Heart left ventricle (tissue), 16 donors: ENCODE measurements at regions of chr4 and their contacts with region 1.

Region 1: DNA sequence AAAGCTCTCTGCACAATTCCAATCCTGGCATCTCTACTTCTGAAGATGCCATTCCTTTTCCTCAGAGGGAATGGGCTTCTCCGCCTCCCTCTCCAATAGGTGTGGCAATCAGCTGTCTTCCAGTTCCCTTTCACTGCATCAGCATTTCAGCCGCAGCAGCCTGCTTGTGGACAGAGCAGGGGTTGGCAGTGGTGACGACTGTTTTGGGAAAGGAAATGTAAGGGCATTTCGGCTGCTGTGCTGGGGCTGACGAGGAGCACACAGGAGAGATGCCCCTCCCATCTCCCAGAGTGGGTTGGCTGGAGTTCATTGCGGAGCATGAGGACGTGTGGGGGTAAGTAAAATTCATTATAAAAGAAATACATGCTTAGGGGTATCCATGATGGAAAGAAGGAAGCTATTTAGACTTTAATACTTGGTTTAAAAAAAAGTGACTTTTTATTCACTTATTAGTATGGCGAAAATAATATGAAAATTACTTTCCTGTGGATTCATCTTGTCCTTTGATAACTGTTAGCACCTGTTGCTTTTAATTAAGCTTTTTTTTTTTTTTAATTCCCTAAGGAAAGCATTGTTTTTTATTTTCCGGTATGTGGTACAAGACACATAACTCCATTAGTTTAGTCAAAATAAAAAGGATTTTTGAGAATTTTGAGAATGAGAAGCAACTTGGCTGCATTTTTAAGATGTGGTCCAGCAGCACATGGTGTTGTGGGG is at the start of gene LIMCH1:
- DNase-seq: peak; percentile 79 to 90 (median 81)
- ATAC-seq: peak; percentile 82 to 92 (median 86)
- H3K4me3 ChIP-seq: peak within 1 kb of the TSS; percentile 7 to 51 (median 33)
- H3K27ac ChIP-seq: peak within 1 kb of the TSS; percentile 75 to 95 (median 88)
- H3K4me1 ChIP-seq: peaks cover 0 to 99% (median 79%) of the 10 kb centered on the region in 12 donors
- H3K27me3 ChIP-seq: no peaks in the 10 kb centered on the region
- CTCF ChIP-seq: no peak
- POLR2A ChIP-seq: no peak
- total RNA-seq, gene LIMCH1: 169 to 345 (median 247) TPM

Region 2: DNA sequence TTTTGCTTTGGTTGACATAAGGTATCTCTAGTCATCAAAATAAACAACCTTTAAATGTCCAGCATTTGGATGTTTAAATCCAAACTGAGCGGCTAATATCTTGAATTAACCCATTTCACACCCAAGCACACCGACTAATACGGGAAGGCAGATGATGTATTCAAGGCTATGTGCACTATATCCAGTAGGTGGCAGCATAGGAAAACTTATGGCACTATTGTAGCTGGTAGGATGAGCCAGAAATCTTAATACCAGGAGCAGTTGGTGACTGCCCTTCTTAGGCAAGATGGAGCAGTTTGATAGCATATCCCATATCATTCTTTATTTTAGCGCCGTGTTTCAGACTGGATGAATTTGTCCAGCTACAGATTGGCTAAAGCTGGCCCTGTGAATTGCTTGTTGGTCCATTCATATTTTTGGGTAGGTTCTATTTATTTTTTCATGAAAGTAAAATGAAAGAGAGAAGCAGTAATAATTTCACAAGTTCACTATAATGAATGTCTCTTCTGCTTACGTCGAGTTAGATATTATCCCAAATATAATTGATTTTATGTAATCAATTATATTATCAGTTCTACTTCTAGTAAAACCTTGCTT is 257.0 kb before region 1 on chr4:
- intact Hi-C with region 1: loop called in 1 of 10 experiments (anchors 10 kb)
- DNase-seq: peak in 2 of 5 donors; percentile 35 to 50
- ATAC-seq: peak; percentile 94 to 96 (median 95)
- H3K4me3 ChIP-seq: no peak overlapping the region
- H3K27ac ChIP-seq: no peak overlapping the region
- H3K4me1 ChIP-seq: peaks cover 0 to 7% (median 0%) of the 10 kb centered on the region in 12 donors
- H3K27me3 ChIP-seq: peaks cover 0 to 4% (median 0%) of the 10 kb centered on the region in 9 donors
- CTCF ChIP-seq: peak; percentile 78 to 94 (median 87)
- POLR2A ChIP-seq: no peak

Region 3: GRCh38 chr4:41369697-41370096 is 168.5 kb before region 1 on chr4:
- intact Hi-C with region 1: loop called in 8 of 10 experiments (anchors 5 to 10 kb)
- DNase-seq: peak in 4 of 5 donors; percentile 65 to 83 (median 71)
- ATAC-seq: peak; percentile 84 to 94 (median 92)
- H3K4me3 ChIP-seq: peak overlapping the region in 1 of 12 donors; percentile 24
- H3K27ac ChIP-seq: peak overlapping the region in 9 of 12 donors; percentile 38 to 85 (median 65)
- H3K4me1 ChIP-seq: peaks cover 0 to 95% (median 54%) of the 10 kb centered on the region in 12 donors
- H3K27me3 ChIP-seq: no peaks in the 10 kb centered on the region
- CTCF ChIP-seq: no peak
- POLR2A ChIP-seq: no peak

Region 4: DNA sequence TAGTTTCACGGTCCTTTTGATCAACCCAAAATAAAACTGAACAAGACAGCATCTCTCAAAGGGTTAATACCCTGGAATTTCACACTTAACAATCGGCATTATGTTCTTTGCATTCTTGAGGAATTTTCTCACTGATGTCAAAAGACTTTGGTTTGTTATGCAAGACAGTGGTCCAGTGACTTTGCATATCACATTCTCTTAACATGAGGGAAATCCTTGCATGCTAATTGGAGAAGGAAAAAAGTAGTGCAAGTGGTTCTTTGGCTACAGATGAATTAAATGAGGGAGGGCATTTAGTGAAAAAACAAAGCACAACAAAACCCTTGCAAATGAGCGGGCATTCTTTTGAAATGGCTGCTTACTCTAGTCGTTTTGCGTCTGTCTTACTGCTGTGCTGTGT is 105.3 kb before region 1 on chr4:
- intact Hi-C with region 1: loop called in 3 of 10 experiments (anchors 5 to 10 kb)
- DNase-seq: no peak
- ATAC-seq: no peak
- H3K4me3 ChIP-seq: no peak overlapping the region
- H3K27ac ChIP-seq: peak overlapping the region in 8 of 12 donors; percentile 2 to 93 (median 68)
- H3K4me1 ChIP-seq: peaks cover 3 to 88% (median 61%) of the 10 kb centered on the region in 12 donors
- H3K27me3 ChIP-seq: no peaks in the 10 kb centered on the region
- CTCF ChIP-seq: no peak
- POLR2A ChIP-seq: no peak

Region 5: DNA sequence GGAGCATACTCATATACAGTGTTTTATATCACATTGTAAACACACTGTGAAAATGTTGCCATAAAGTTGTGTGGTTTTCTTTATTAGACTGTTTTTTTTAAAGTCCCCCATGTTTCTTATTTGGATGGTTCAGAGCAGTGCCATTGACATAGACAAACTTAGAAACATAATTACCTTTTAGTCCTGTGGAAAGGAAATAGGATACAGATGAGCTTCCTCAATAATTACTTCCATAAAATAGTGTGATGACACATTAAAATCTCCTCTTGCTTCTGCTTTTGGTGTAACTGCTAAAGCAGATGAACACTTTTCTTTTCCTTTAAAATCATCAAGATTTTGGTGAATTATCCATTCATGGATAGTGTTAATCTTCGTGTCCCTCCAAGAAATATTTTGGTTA is 53.1 kb before region 1 on chr4:
- intact Hi-C with region 1: no loop called
- DNase-seq: no peak
- ATAC-seq: no peak
- H3K4me3 ChIP-seq: no peak overlapping the region
- H3K27ac ChIP-seq: no peak overlapping the region
- H3K4me1 ChIP-seq: peaks cover 0 to 53% (median 17%) of the 10 kb centered on the region in 12 donors
- H3K27me3 ChIP-seq: no peaks in the 10 kb centered on the region
- CTCF ChIP-seq: no peak
- POLR2A ChIP-seq: no peak

Region 6: DNA sequence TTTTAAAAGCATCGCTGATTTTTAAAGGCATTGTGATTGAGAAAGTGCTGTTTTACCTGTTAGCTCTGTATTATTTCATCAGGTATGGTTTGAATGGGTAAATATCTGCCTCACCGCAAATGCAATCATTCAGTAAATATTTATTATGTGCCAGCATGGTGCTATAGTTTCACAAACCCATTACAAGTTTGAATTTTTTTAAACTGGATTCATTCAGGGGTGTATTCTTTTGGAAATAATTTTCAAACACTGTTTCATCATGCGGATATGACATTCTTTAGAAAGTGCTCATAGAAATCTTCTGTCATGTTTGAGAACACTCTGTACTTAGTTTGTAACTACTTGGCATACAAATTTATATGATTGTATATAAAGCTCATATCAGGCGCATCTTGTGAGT is 37.0 kb after region 1 on chr4:
- intact Hi-C with region 1: loop called in 1 of 10 experiments (anchors 5 kb)
- DNase-seq: no peak
- ATAC-seq: no peak
- H3K4me3 ChIP-seq: no peak overlapping the region
- H3K27ac ChIP-seq: peak overlapping the region in 5 of 12 donors; percentile 1 to 48 (median 24)
- H3K4me1 ChIP-seq: peaks cover 4 to 74% (median 33%) of the 10 kb centered on the region in 12 donors
- H3K27me3 ChIP-seq: no peaks in the 10 kb centered on the region
- CTCF ChIP-seq: no peak
- POLR2A ChIP-seq: no peak

Region 7: DNA sequence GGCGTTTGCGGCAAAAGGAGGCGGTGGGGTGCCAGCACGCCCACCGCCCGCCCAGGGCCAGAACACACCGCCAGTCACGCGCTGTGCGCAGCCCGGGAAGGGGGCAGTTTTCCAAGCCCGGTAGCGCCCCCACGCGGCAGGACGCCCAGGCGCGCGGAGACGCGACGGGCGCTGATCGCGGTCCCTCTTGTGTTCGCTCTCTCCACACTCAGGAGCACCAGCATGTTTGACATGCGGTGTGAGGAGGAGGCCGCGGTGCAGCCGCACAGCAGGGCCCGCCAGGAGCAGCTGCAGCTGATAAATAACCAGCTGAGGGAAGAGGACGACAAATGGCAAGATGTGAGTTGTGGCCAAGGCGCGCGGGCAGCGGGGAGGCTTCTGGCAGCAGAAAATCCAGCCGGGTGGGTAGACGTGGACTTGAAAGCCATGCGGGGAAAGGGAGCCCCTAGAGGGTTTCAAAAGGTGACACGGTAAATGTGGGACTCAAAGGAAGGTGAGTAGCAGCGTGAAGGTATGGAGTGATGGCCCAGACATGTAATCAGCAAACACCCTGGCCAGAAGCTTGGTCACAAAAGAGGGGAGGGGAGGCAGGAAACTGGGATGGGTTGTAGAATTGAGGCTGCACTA is 106.2 kb after region 1 on chr4:
- intact Hi-C with region 1: loop called in 2 of 10 experiments (anchors 10 kb)
- DNase-seq: peak; percentile 64 to 87 (median 77)
- ATAC-seq: peak; percentile 63 to 94 (median 92)
- H3K4me3 ChIP-seq: peak overlapping the region in 6 of 12 donors; percentile 7 to 31 (median 14)
- H3K27ac ChIP-seq: peak overlapping the region in 4 of 12 donors; percentile 27 to 55 (median 46)
- H3K4me1 ChIP-seq: peaks cover 0 to 36% (median 24%) of the 10 kb centered on the region in 12 donors
- H3K27me3 ChIP-seq: peaks cover 0 to 19% (median 0%) of the 10 kb centered on the region in 9 donors
- CTCF ChIP-seq: peak; percentile 76 to 96 (median 90)
- POLR2A ChIP-seq: no peak